PC-3 (cell line): ENCODE measurements at regions of chr12 and their contacts with region 1.

Region 1: GRCh38 chr12:130871286-130872178 is at the start of gene RAN:
- DNase-seq: peak; percentile 99
- ATAC-seq: peak; percentile 91
- H3K4me3 ChIP-seq: peak within 1 kb of the TSS; percentile 79
- H3K27ac ChIP-seq: peak within 1 kb of the TSS; percentile 19
- H3K4me1 ChIP-seq: peaks cover 26% of the 10 kb centered on the region
- H3K27me3 ChIP-seq: no peaks in the 10 kb centered on the region
- CTCF ChIP-seq: no peak
- total RNA-seq, gene RAN: 3,300 and 3,371 TPM in 2 replicates

Region 2: GRCh38 chr12:130813436-130813835 is 58.1 kb before region 1 on chr12:
- CTCF ChIA-PET with region 1: no interaction called
- POLR2A ChIA-PET with region 1: no interaction called
- intact Hi-C with region 1: no loop called
- DNase-seq: no peak
- ATAC-seq: no peak
- H3K4me3 ChIP-seq: no peak overlapping the region
- H3K27ac ChIP-seq: no peak overlapping the region
- H3K4me1 ChIP-seq: peaks cover 6% of the 10 kb centered on the region; the same call in 1 of the 2 replicates
- H3K27me3 ChIP-seq: no peaks in the 10 kb centered on the region
- CTCF ChIP-seq: no peak

Region 3: DNA sequence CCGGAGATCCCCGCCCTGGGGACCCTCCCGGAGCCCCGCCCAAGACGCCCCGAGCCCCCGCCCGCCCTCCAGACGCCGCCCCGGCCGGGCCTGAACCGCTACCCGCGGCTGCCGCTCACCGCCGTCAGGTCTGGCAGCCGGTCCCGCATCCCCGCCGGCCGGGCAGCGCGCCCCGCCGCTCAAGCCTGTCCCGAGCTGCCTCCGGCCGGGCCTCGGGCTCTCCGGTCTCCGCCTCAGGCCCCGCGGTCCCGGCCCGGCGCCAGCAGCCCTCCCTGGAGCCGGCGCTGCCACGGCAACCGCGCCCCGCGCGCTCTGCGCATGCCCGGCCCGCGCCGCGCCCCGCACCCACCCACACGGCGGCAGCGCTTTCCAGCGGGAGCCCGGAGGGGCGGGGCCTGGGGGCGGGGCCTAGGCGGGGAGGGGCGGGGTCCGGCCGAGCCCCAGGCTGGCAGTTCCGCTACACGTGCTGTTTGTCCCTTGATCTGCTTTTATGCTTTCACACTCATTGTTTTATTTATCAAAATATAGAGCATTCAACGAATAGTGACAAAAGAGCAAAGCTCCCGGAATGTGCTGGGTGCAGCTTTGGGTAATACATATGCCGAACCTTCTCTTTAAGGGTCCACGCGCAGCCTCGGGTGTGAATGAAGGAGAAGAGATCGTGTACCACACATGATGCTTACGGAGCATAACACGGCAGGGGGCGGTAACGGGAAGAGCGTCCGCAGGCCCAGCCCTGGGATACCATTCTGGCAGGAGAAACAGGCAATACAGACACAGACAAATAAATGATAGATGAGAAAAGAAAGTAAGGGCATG is 32.4 kb before region 1 on chr12 and contains the start of gene STX2:
- CTCF ChIA-PET with region 1: no interaction called
- POLR2A ChIA-PET with region 1: interaction called, 3 read pairs
- intact Hi-C with region 1: loop called (anchors 1 kb)
- DNase-seq: peak; percentile 90
- ATAC-seq: peak; percentile 78
- H3K4me3 ChIP-seq: peak within 1 kb of the TSS; percentile 74
- H3K27ac ChIP-seq: no peak within 1 kb of the TSS
- H3K4me1 ChIP-seq: peaks cover 13% of the 10 kb centered on the region
- H3K27me3 ChIP-seq: no peaks in the 10 kb centered on the region
- CTCF ChIP-seq: peak; percentile 47
- total RNA-seq, gene STX2: 18.2 and 24.0 TPM in 2 replicates